SK-N-SH (cell line): ENCODE measurements at regions of chr19 and their contacts with region 1.

Region 1: DNA sequence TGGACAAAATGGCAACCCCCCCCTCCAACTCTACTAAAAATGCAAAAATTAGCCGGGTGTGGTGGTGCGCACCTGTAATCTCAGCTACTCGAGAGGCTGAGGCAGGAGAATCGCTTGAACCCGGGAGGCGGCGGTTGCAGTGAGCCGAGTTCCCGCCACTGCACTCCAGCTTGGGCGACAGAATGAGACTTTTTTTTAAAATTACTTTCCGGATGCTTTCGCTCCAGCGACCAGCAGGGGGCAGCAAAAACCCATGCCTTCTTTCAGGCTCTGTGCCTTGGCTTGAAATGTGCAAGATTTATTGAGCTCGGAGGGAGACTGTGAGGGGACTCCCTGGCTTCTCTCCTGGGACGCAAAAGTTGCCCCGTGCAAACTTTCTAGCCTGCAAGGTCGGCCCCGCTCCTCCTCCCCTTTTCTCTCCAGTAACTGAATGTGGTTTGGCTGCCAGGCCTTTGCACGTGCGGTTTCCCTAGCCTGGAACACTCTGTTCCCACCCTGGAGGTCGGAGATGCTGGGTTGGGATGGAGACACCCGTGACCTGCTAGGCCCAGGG is 61.4 kb upstream of the NFIC start:
- DNase-seq: peak; percentile 75
- H3K4me3 ChIP-seq: peak overlapping the region in 1 of 2 experiments; percentile 50; a peak in 2 of 4 replicates
- H3K27ac ChIP-seq: no peak overlapping the region
- H3K4me1 ChIP-seq: no peaks in the 10 kb centered on the region; a peak in 1 of 4 replicates
- H3K27me3 ChIP-seq: peaks cover 7% of the 10 kb centered on the region; the same call in 1 of the 2 replicates
- CTCF ChIP-seq: peak; percentile 93
- EP300 ChIP-seq: no peak
- RAD21 ChIP-seq: peak; percentile 82

Region 2: GRCh38 chr19:3193256-3194105 is 111.5 kb before region 1 on chr19:
- CTCF ChIA-PET with region 1: no interaction called
- POLR2A ChIA-PET with region 1: no interaction called
- DNase-seq: no peak
- H3K4me3 ChIP-seq: no peak overlapping the region
- H3K27ac ChIP-seq: no peak overlapping the region
- H3K4me1 ChIP-seq: no peaks in the 10 kb centered on the region; a peak in 1 of 4 replicates
- H3K27me3 ChIP-seq: no peaks in the 10 kb centered on the region
- CTCF ChIP-seq: no peak
- EP300 ChIP-seq: no peak
- RAD21 ChIP-seq: no peak

Region 3: DNA sequence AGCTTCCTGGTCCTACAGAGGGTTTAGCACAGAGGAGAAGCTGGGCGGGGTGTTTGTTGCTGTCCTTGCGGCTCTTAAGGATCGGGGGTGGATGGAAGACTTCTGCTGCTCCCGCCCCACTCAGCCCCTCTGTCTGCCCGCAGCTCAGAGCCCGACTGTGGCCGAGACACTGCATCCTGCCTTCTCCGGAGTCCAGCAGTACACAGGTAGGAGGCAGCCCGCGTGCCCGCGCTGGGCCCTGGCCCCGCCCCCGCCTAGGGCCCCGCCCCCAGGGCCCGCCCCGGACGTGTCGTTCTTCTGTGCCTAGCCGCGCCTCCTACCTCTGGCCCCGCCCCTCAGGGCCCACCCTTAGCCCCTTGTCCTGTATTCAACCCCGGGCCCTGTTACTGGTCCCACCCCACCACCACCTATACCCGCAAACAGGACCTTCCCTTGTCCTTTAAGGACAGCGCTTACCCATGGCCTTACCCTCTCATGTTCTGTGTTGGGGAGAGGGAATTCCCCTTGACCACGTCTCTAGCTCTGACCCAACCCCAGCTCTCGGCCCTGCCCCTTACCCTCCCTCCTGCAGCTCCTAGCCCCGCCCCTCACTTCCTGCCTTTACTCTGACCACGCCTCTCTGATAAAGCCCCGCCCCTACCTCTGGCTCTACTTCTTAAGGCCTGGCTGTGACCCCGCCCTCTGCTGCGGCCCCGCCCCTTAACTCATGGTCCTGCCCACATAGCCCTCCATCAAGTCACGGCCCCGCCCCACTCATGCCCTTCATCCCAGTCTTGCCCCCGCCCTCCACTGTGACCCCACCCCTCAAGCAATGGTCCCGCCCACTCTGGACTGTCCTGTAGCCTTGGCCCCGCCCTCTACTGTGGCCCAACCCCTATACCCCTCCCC is 19.9 kb before region 1 on chr19:
- CTCF ChIA-PET with region 1: interaction called, 34 read pairs
- POLR2A ChIA-PET with region 1: no interaction called
- DNase-seq: peak; percentile 77
- H3K4me3 ChIP-seq: no peak overlapping the region
- H3K27ac ChIP-seq: no peak overlapping the region
- H3K4me1 ChIP-seq: no peaks in the 10 kb centered on the region
- H3K27me3 ChIP-seq: no peaks in the 10 kb centered on the region; the same call in 1 of the 2 replicates
- CTCF ChIP-seq: no peak
- EP300 ChIP-seq: no peak
- RAD21 ChIP-seq: no peak

Region 4: GRCh38 chr19:3289971-3290569 is 14.9 kb before region 1 on chr19:
- CTCF ChIA-PET with region 1: interaction called, 34 read pairs
- POLR2A ChIA-PET with region 1: no interaction called
- DNase-seq: peak; percentile 23
- H3K4me3 ChIP-seq: no peak overlapping the region
- H3K27ac ChIP-seq: no peak overlapping the region
- H3K4me1 ChIP-seq: no peaks in the 10 kb centered on the region
- H3K27me3 ChIP-seq: no peaks in the 10 kb centered on the region; the same call in 1 of the 2 replicates
- CTCF ChIP-seq: no peak
- EP300 ChIP-seq: no peak
- RAD21 ChIP-seq: no peak

Region 5: GRCh38 chr19:3314962-3315675 is 10.2 kb after region 1 on chr19:
- CTCF ChIA-PET with region 1: interaction called, 13 read pairs
- POLR2A ChIA-PET with region 1: interaction called, 5 read pairs
- DNase-seq: peak; percentile 33
- H3K4me3 ChIP-seq: no peak overlapping the region
- H3K27ac ChIP-seq: no peak overlapping the region
- H3K4me1 ChIP-seq: no peaks in the 10 kb centered on the region
- H3K27me3 ChIP-seq: peaks cover 13% of the 10 kb centered on the region; the same call in 1 of the 2 replicates
- CTCF ChIP-seq: no peak
- EP300 ChIP-seq: no peak
- RAD21 ChIP-seq: no peak

Region 6: DNA sequence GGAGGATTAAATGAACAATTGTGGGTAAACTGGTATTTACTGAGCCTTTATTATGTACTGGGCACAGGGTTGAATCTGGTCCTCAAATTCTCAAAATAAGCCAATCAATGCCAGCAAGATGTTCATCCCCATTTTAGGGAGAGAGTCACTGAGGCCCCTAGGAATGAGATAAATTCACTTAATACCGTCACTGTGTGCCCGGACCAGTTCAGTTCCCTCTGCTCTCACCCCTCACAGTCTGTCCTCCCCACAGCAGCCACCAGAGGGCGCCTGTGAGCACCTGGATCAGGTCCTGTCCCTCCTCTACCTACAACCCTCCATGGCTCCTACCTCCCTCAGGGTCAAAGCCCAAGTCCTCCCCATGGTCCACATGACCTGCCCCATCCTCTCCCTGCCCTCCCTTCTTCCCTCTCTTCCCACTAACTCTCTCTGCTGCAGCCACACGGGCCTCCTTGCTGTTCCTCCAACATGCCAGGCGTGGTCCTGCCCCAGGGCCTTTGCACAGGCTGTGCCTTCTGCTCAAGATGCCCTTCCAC is 19.4 kb after region 1 on chr19:
- CTCF ChIA-PET with region 1: interaction called, 13 read pairs
- POLR2A ChIA-PET with region 1: no interaction called
- DNase-seq: peak; percentile 74
- H3K4me3 ChIP-seq: no peak overlapping the region
- H3K27ac ChIP-seq: no peak overlapping the region
- H3K4me1 ChIP-seq: no peaks in the 10 kb centered on the region
- H3K27me3 ChIP-seq: peaks cover 15% of the 10 kb centered on the region; the same call in 1 of the 2 replicates
- CTCF ChIP-seq: peak; percentile 80
- EP300 ChIP-seq: no peak
- RAD21 ChIP-seq: peak; percentile 33

Region 7: DNA sequence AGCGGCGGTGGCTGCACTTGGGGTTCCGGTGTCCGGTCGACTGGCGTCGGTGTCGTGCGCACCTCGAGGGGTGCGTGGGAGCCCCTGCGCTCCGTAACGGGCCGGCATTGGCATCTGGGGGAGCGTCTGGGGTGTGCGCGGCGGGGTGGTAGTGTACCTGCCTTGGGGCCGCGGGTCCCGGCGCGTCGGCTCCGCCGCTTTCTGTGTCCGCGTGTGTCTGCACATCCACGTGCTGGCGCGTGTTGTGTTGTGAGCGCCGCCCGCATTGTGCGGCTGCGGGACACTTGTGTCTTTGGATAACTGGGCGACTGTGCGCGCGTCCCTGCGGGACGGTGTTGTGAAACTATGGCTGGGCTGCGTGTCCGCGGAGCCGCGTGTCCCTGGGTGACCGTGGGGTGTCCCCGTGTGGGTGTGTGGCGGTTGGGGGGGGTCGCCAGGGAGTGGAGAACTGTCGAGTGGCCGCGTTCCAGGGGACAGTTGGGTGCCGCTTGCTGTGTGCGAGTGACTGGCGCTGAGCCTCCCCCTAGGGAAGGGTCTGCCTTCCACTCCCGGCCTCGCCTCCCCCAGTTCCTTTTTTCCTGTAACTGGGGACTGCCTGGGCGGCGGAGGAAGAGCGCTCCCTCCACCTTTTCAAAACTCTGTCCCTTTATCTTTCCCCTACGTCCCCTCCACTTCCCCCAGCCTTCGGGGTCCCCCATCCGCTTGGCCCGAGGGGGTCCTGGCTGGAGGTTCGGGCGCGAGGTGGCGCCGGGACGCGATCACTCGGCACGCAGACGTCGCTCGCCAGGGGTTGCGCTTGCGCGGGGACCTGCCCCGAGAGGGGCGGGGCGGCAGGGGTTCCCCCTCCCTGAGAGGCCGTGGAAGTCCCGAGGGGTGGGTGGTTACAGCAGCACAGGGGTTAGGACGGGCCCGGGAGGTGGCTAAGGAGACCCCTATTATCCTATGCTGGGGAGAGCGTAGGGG is 55.8 kb after region 1 on chr19:
- CTCF ChIA-PET with region 1: no interaction called
- POLR2A ChIA-PET with region 1: no interaction called
- DNase-seq: peak; percentile 83
- H3K4me3 ChIP-seq: peak overlapping the region; percentile 71 to 76
- H3K27ac ChIP-seq: peak overlapping the region; percentile 20 to 90; a peak in 3 of 4 replicates
- H3K4me1 ChIP-seq: peaks cover 5 to 33% of the 10 kb centered on the region in 2 experiments; a peak in 2 of 4 replicates
- H3K27me3 ChIP-seq: no peaks in the 10 kb centered on the region
- CTCF ChIP-seq: peak; percentile 22; the same call in 1 of the 2 replicates
- EP300 ChIP-seq: no peak
- RAD21 ChIP-seq: peak; percentile 36; the same call in 1 of the 2 replicates

Region 8: GRCh38 chr19:3466635-3467034 is 161.7 kb after region 1 on chr19:
- CTCF ChIA-PET with region 1: interaction called, 19 read pairs
- POLR2A ChIA-PET with region 1: no interaction called
- DNase-seq: no peak
- H3K4me3 ChIP-seq: no peak overlapping the region
- H3K27ac ChIP-seq: no peak overlapping the region
- H3K4me1 ChIP-seq: peaks cover 0 to 2% of the 10 kb centered on the region in 2 experiments; a peak in 1 of 4 replicates
- H3K27me3 ChIP-seq: no peaks in the 10 kb centered on the region
- CTCF ChIP-seq: no peak
- EP300 ChIP-seq: no peak
- RAD21 ChIP-seq: no peak

Region 9: DNA sequence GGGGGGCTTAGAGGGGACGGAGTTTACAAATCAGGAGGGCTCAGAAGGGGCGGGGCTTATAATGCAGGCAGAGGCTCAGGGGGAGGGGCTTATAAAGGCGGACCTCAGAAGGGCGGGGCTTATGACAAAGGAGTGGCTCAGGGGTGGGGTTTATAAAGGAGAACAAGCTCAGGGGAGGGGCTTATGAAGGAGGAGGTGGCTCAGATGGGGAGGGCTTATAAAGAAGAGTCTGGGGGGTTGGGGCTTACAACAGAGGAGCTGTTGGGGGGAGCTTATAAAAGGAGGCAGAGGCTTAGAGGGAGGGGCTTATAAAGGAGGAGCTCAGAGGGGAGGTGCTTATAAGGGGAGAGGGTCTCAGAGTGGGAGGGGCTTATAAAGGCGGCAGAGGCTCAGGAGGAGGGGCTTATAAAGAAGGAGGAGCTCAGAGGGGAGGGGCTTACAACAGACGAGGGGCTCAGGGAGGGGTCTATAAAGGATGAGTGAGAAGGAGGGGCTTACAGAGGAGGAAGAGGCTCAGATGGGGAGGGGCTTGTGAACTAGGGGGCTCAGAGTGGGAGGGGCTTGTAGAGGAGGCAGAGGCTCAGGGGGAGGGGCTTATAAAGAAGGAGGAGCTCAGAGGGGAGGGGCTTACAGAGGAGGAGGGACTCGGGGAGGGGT is 174.4 kb after region 1 on chr19:
- CTCF ChIA-PET with region 1: interaction called, 88 read pairs
- POLR2A ChIA-PET with region 1: no interaction called
- DNase-seq: peak; percentile 78
- H3K4me3 ChIP-seq: no peak overlapping the region
- H3K27ac ChIP-seq: no peak overlapping the region
- H3K4me1 ChIP-seq: no peaks in the 10 kb centered on the region; a peak in 1 of 4 replicates
- H3K27me3 ChIP-seq: no peaks in the 10 kb centered on the region; the same call in none of the 2 replicates
- CTCF ChIP-seq: no peak
- EP300 ChIP-seq: no peak
- RAD21 ChIP-seq: no peak